Activated CD4-positive, alpha-beta memory T cell treated with anti-CD3 and anti-CD28 coated beads for 36 hours (primary cell): ENCODE measurements at regions of chr3 and their contacts with region 1.

Region 1: GRCh38 chr3:72375237-72376076 is 472.8 kb downstream of the SHQ1 start:
- DNase-seq: peak; percentile 70
- H3K4me3 Mint-ChIP-seq: peak overlapping the region; percentile 6
- H3K27ac Mint-ChIP-seq: peak overlapping the region; percentile 86
- H3K4me1 Mint-ChIP-seq: peaks cover 65% of the 10 kb centered on the region
- H3K27me3 Mint-ChIP-seq: no peaks in the 10 kb centered on the region

Region 2: DNA sequence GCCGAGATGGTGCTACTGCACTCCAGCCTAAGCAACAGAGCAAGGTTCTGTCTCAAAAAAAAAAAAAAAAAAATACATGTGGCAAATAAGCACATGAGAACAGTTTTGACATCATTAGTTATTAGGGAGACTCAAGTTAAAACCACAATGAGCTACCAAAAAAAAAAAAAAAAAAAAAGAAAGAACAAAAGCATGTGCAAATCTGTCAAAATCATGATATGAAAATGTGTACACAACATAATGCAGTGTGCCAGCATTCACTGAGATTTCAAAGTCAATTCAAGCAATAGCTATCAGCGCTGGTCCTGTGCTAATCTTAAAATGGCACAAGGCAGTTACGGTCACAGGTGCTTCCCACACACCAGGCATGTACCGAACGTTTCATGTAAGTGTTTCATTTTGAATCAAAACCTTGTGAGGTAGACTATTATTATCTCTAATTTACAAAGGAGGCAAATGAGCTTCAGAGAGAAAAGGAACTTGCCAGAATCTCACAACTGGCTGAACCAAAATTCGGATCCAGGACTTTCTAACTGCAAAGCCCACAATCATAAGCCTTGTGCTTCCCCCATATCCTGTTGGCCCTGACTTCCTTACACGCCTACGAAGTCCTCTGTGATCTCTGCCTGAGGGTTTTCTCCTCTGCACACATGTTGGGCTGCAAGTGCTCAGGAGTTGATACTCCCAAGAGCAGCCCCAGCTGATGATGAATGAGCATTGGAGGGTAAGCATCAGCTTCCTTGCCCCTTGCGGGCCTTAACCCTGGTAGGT is 390.4 kb before region 1 on chr3:
- CTCF ChIA-PET with region 1: no interaction called
- POLR2A ChIA-PET with region 1: no interaction called
- intact Hi-C with region 1: loop called (anchors 10 kb)
- DNase-seq: peak; percentile 70
- H3K4me3 Mint-ChIP-seq: peak overlapping the region; percentile 13
- H3K27ac Mint-ChIP-seq: peak overlapping the region; percentile 83
- H3K4me1 Mint-ChIP-seq: peaks cover 42% of the 10 kb centered on the region
- H3K27me3 Mint-ChIP-seq: peaks cover 9% of the 10 kb centered on the region

Region 3: DNA sequence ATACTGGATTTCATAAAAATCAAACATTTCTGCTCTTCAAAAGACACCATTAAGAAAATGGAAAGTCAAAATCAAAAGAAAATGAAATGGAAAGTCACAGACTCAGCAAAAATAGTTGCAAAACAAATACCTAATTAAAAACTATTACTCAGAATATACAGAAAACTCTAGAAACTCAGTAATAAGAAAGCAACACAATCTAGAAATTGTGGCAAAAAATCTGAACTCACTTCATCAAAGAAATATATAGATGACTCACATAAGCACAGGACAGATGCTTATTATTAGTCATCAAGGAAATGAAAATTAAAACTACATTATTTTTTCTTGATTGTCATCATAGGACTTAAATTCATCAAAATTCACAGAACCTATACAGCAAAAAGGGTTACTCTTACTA is 42.8 kb after region 1 on chr3:
- CTCF ChIA-PET with region 1: no interaction called
- POLR2A ChIA-PET with region 1: no interaction called
- intact Hi-C with region 1: loop called (anchors 2 kb)
- DNase-seq: no peak
- H3K4me3 Mint-ChIP-seq: no peak overlapping the region
- H3K27ac Mint-ChIP-seq: no peak overlapping the region
- H3K4me1 Mint-ChIP-seq: peaks cover 69% of the 10 kb centered on the region
- H3K27me3 Mint-ChIP-seq: no peaks in the 10 kb centered on the region

Region 4: GRCh38 chr3:72657666-72658065 is 282.2 kb after region 1 on chr3:
- CTCF ChIA-PET with region 1: no interaction called
- POLR2A ChIA-PET with region 1: no interaction called
- intact Hi-C with region 1: no loop called
- DNase-seq: peak; percentile 67
- H3K4me3 Mint-ChIP-seq: no peak overlapping the region
- H3K27ac Mint-ChIP-seq: no peak overlapping the region
- H3K4me1 Mint-ChIP-seq: peaks cover 13% of the 10 kb centered on the region
- H3K27me3 Mint-ChIP-seq: peaks cover 8% of the 10 kb centered on the region